Activated T-helper 1 cell treated with anti-CD3 and anti-CD28 coated beads, Interleukin-12 subunit alpha, Interleukin-12 subunit beta, Interleukin-2, Interleukin-4 antibody, amounts not matched to agents 30 ng/mL and 10 ng/mL and 1 ng/mL, durations not matched to agents 14 hours and 24 hours and 36 hours (primary cell): ENCODE measurements at regions of chr4 and their contacts with region 1.

Region 1: DNA sequence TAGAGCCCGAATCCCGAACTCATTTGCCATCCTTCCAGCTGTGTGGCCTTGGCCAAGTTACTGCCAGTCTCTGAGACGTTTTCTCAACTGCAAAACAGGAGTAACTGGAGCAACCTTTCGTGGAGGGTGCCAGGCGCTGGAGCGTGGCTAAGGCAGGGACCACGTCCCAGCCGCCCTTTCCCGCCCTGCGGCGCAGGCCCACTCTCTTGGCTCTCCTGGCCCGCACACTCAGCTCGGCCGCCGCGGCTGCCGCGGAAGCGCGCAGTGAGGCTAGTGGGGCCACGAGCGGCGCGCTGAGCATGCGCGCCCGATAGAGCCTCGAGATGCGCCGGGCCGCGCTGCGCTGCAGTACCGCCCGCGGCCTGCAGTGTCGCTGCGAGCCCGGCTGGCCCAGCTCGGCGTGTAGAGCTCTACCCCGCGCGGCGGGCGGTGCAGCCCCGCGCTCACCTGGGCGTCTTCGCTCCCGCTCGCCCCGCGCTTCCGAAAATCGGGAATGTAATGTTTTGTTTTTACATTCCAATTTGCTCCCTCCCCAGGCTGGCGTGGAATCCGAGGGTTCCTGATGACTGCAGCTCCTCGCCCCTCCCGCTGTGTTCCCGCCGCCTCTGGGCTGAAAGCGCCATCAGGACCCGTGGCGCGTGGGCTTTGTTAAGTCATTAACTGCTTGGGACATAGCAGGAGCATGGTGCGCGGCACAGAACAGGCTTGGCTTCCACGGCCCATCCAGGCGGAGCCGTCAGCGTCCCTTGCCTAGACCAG is 4.0 kb upstream of the ZNF518B start:
- DNase-seq: peak; percentile 76
- H3K4me3 Mint-ChIP-seq: peak overlapping the region; percentile 77
- H3K27ac Mint-ChIP-seq: no peak overlapping the region
- H3K4me1 Mint-ChIP-seq: peaks cover 34% of the 10 kb centered on the region
- H3K27me3 Mint-ChIP-seq: peaks cover 33% of the 10 kb centered on the region

Region 2: GRCh38 chr4:10096201-10096977 is 364.9 kb before region 1 on chr4:
- intact Hi-C with region 1: loop called (anchors 2 kb)
- DNase-seq: peak; percentile 72
- H3K4me3 Mint-ChIP-seq: peak overlapping the region; percentile 62
- H3K27ac Mint-ChIP-seq: peak overlapping the region; percentile 99
- H3K4me1 Mint-ChIP-seq: peaks cover 94% of the 10 kb centered on the region
- H3K27me3 Mint-ChIP-seq: no peaks in the 10 kb centered on the region

Region 3: DNA sequence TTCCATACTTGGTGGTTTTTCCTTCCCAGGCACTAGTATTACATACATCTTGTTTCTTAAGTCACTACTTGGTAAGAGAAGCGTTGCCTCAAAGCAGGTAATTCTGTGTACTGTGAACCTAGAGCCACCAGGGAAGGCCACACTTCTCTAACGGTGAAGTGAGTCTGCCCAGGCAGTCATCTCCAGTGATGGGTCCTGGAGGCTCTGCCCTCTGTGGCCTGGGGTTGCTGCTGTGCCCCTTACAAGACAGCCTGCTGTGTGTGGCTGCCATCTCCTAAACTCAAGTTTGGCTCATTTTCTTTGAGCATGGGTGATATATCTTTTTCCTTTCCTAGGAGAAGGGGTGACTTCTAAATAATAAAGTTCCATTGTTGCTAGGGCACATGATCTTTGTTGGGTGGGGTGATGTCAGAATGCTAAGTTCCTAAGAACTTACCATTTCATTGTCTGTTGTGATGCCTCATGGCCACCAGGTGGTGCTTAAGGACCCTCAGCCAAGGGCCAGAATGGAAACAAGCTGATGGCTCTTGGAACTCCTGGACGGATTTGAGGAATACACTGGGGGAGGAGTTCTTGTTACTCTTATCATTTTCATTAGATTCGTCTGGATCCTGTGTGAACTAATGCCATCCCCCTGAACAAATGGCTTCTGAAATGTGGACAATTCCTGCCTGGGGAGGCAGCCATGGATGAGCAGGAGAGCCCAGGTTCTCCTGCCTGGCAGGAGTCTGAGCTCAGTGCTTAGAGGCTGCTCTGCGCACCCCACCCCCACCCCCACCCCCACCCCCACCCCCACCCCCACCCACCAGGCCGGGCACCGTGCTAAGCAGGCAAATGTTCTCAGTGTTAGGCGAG is 303.6 kb before region 1 on chr4:
- intact Hi-C with region 1: loop called (anchors 1 kb)
- DNase-seq: peak; percentile 16
- H3K4me3 Mint-ChIP-seq: no peak overlapping the region
- H3K27ac Mint-ChIP-seq: no peak overlapping the region
- H3K4me1 Mint-ChIP-seq: peaks cover 43% of the 10 kb centered on the region
- H3K27me3 Mint-ChIP-seq: peaks cover 5% of the 10 kb centered on the region

Region 4: GRCh38 chr4:10421344-10422055 is 39.8 kb before region 1 on chr4:
- intact Hi-C with region 1: no loop called
- DNase-seq: no peak
- H3K4me3 Mint-ChIP-seq: no peak overlapping the region
- H3K27ac Mint-ChIP-seq: no peak overlapping the region
- H3K4me1 Mint-ChIP-seq: peaks cover 4% of the 10 kb centered on the region
- H3K27me3 Mint-ChIP-seq: peaks cover 4% of the 10 kb centered on the region

Region 5: DNA sequence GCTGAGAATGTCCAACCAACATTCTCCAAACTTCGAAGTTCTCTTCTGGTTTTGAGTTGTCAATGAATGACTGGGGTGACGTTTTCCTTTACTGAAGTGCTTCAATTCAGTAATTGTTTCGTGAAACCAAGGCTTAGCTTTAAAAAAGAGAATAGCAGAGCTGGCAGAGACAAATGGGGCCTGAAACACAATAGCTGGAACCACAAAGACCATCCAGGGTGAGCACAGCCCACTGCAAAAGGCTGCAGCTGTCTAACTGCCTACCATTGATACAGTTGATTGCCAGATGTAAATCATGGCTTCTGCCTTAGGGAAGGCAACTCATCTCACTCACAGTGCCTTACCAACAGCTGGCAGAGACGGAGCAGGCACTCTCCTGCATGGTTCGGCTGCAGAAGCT is 74.6 kb after region 1 on chr4:
- intact Hi-C with region 1: loop called (anchors 1 kb)
- DNase-seq: no peak
- H3K4me3 Mint-ChIP-seq: no peak overlapping the region
- H3K27ac Mint-ChIP-seq: no peak overlapping the region
- H3K4me1 Mint-ChIP-seq: no peaks in the 10 kb centered on the region
- H3K27me3 Mint-ChIP-seq: peaks cover 9% of the 10 kb centered on the region

Region 6: GRCh38 chr4:10655986-10656385 is 194.7 kb after region 1 on chr4:
- intact Hi-C with region 1: loop called (anchors 5 kb)
- DNase-seq: no peak
- H3K4me3 Mint-ChIP-seq: peak overlapping the region; percentile 35
- H3K27ac Mint-ChIP-seq: peak overlapping the region; percentile 86
- H3K4me1 Mint-ChIP-seq: peaks cover 43% of the 10 kb centered on the region
- H3K27me3 Mint-ChIP-seq: no peaks in the 10 kb centered on the region

Region 7: DNA sequence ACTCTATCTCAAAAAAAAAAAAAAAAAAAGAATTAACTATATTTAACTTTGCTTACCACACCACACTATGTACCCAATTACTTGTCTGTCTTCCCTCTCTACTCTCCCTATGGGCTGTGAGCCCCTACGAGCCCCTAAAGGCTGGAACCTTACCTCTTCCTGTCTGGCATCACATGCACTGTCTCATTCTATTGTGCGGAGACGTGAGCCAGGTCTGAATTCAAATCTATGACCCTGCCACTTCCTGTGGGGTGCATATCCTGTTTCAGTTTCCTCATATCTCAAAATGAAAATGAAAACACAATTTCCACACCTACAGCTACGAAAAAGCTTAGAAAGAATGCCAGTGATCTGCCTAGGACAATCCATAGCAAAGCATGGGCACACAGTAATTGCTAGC is 1010.3 kb after region 1 on chr4:
- intact Hi-C with region 1: loop called (anchors 2 kb)
- DNase-seq: peak; percentile 57
- H3K4me3 Mint-ChIP-seq: peak overlapping the region; percentile 69
- H3K27ac Mint-ChIP-seq: peak overlapping the region; percentile 90
- H3K4me1 Mint-ChIP-seq: peaks cover 46% of the 10 kb centered on the region
- H3K27me3 Mint-ChIP-seq: no peaks in the 10 kb centered on the region